Activated CD4-positive, alpha-beta T cell treated with anti-CD3 and anti-CD28 coated beads, Interleukin-2, amount 10 ng/mL, durations not matched to agents 24 days and 14 days (primary cell): ENCODE measurements at regions of chr1 and their contacts with region 1.

Region 1: GRCh38 chr1:153967082-153968000 is at the start of gene CREB3L4:
- DNase-seq: peak; percentile 95
- H3K4me3 Mint-ChIP-seq: peak within 1 kb of the TSS; percentile 92
- H3K27ac Mint-ChIP-seq: peak within 1 kb of the TSS; percentile 98
- H3K4me1 Mint-ChIP-seq: peaks cover 48% of the 10 kb centered on the region
- H3K27me3 Mint-ChIP-seq: no peaks in the 10 kb centered on the region
- total RNA-seq, gene CREB3L4: 8.3 and 9.7 TPM in 2 replicates

Region 2: GRCh38 chr1:153805042-153805745 is 162.1 kb before region 1 on chr1:
- intact Hi-C with region 1: loop called (anchors 1 kb)
- DNase-seq: peak; percentile 87
- H3K4me3 Mint-ChIP-seq: peak overlapping the region; percentile 11
- H3K27ac Mint-ChIP-seq: peak overlapping the region; percentile 75
- H3K4me1 Mint-ChIP-seq: peaks cover 25% of the 10 kb centered on the region
- H3K27me3 Mint-ChIP-seq: no peaks in the 10 kb centered on the region

Region 3: GRCh38 chr1:153977250-153978240 is 10.2 kb after region 1 on chr1 and contains the start of gene JTB:
- intact Hi-C with region 1: loop called (anchors 1 kb)
- DNase-seq: peak; percentile 95
- H3K4me3 Mint-ChIP-seq: peak within 1 kb of the TSS; percentile 99
- H3K27ac Mint-ChIP-seq: peak within 1 kb of the TSS; percentile 97
- H3K4me1 Mint-ChIP-seq: peaks cover 36% of the 10 kb centered on the region
- H3K27me3 Mint-ChIP-seq: no peaks in the 10 kb centered on the region
- total RNA-seq, gene JTB: 195 and 200 TPM in 2 replicates